ENCODE measurements at regions of chr10 and their contacts with region 1.

Region 1: GRCh38 chr10:67923551-67923950 is 39.1 kb downstream of the SIRT1 start:
- DNase-seq: no peak
- H3K4me3 ChIP-seq: no peak overlapping the region
- H3K27ac ChIP-seq: no peak overlapping the region
- H3K4me1 ChIP-seq: no peaks in the 10 kb centered on the region
- H3K27me3 ChIP-seq: no peaks in the 10 kb centered on the region
- CTCF ChIP-seq: no peak
- POLR2A ChIP-seq: no peak

Region 2: GRCh38 chr10:68043030-68043429 is 119.5 kb after region 1 on chr10:
- CTCF ChIA-PET with region 1: no interaction called
- POLR2A ChIA-PET with region 1: no interaction called
- dilution Hi-C with region 1: loop called (anchors 25 kb)
- intact Hi-C with region 1: no loop called
- DNase-seq: no peak
- H3K4me3 ChIP-seq: no peak overlapping the region
- H3K27ac ChIP-seq: no peak overlapping the region
- H3K4me1 ChIP-seq: no peaks in the 10 kb centered on the region
- H3K27me3 ChIP-seq: no peaks in the 10 kb centered on the region
- CTCF ChIP-seq: no peak
- POLR2A ChIP-seq: no peak

Region 3: GRCh38 chr10:68901104-68901927 is 977.8 kb after region 1 on chr10 and contains the start of gene DDX50:
- CTCF ChIA-PET with region 1: no interaction called
- POLR2A ChIA-PET with region 1: no interaction called
- dilution Hi-C with region 1: no loop called
- intact Hi-C with region 1: no loop called
- DNase-seq: peak; percentile 99
- H3K4me3 ChIP-seq: peak within 1 kb of the TSS; percentile 62 to 92 (median 79)
- H3K27ac ChIP-seq: peak within 1 kb of the TSS; percentile 94
- H3K4me1 ChIP-seq: peaks cover 14% of the 10 kb centered on the region
- H3K27me3 ChIP-seq: no peaks in the 10 kb centered on the region
- CTCF ChIP-seq: peak in 1 of 2 donors; percentile 14
- POLR2A ChIP-seq: peak; percentile 91
- total RNA-seq, gene DDX50: 25.9 and 28.2 TPM in 2 replicates